Ovary (tissue), 10 donors: ENCODE measurements at regions of chr17 and their contacts with region 1.

Region 1: DNA sequence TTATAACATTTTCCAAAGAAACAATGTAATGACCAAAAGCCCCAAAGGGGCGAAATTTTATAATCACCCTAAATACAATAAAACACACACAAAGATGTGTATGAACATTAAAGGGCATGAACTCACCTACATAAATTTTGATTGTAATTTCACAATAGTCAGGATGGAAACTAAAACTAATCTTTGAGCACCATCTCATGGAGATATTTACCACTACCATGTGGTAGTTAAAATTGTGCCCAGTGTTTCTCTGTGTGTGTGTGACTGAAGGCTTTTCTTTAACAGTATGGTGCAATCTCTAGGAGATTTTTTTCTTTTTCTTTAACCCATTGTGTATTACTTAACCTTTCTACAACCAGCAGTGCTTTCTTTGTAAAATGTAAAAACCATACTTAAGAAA is 19.7 kb upstream of the MEIOC start:
- DNase-seq: no peak
- H3K4me3 ChIP-seq: no peak overlapping the region
- H3K27ac ChIP-seq: no peak overlapping the region
- H3K4me1 ChIP-seq: no peaks in the 10 kb centered on the region
- H3K27me3 ChIP-seq: no peaks in the 10 kb centered on the region
- CTCF ChIP-seq: peak in 2 of 3 donors; percentile 61 to 63
- EP300 ChIP-seq: no peak
- POLR2A ChIP-seq: no peak

Region 2: DNA sequence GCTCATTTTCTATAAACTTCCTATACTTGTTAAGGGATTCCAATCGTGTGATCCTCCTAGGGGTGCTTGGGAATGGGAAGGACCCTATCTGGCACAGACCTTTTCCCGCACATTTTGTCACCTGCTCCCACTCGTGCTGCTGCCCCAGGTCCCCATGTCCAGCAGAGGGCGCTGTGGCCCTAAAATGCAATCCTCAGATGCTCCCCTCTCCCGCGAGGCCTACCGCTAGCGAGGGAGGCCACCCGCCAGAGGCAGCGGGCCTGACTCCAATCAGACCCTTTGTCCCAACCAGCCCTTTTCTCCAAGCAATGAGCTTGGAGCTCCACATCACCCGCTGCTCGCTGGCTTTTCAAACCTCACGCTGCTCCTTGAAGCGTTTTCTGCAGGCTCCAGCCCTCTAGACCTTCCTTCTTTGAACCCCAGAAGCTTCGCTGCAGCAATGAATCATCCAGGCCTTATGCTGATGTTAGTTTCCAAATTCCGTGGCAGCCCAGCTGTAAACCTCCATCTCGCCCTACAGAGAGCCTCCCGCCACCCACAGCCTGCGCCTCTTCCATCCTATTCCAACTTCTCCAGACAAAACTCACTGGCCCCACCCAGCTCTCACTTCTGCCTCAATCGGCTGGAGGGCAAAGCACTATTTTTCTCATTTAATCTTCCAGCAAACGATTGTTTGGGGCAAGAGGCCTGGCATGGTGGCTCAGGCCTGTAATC is 102.9 kb before region 1 on chr17:
- intact Hi-C with region 1: loop called (anchors 2 to 5 kb)
- DNase-seq: peak; percentile 90 to 94 (median 92)
- H3K4me3 ChIP-seq: no peak overlapping the region
- H3K27ac ChIP-seq: peak overlapping the region in 1 of 2 donors; percentile 40
- H3K4me1 ChIP-seq: peaks cover 9% of the 10 kb centered on the region
- H3K27me3 ChIP-seq: no peaks in the 10 kb centered on the region
- CTCF ChIP-seq: peak; percentile 88 to 92 (median 90)
- EP300 ChIP-seq: no peak
- POLR2A ChIP-seq: no peak

Region 3: DNA sequence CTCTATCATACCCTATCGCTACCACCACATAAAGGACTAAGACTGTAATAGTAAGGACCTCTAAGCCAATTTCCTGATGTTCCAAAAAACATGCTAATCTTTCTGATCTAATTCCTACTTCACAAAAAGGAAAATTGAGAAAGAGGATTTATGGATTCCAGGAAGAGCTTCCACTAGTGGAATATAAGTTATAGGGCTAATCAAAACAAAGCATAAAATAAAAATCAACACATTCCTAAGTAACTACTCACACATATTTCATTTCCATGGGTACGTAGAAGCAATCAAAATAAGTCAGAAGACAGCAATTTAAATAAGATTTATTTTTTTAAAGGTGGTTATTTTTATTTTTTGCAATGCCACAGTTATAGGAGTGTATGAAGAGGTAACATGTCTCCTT is 40.6 kb after region 1 on chr17:
- intact Hi-C with region 1: no loop called
- DNase-seq: no peak
- H3K4me3 ChIP-seq: no peak overlapping the region
- H3K27ac ChIP-seq: no peak overlapping the region
- H3K4me1 ChIP-seq: no peaks in the 10 kb centered on the region
- H3K27me3 ChIP-seq: no peaks in the 10 kb centered on the region
- CTCF ChIP-seq: no peak
- EP300 ChIP-seq: no peak
- POLR2A ChIP-seq: no peak